OCI-LY7 (cell line): ENCODE measurements at regions of chr5 and their contacts with region 1.

Region 1: DNA sequence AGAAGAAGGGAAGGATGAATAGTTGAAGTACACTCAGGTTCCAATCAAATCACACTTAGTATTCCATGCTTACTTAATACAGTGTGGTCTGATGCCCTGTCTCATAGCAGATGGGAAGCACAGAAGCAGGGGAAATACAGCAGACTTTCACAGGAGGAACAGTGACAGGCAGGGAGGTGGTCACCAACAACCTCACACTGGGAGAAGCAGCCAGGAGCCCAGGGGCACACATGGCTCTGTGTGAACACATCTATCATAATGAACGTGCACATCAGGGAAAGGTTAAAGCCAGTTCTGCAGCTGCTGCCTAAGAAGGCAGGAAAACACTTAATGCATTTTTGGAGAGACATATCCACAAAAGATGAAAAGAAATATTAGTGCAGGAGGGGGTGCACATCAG is 312.3 kb downstream of the MED10 start:
- DNase-seq: no peak
- H3K4me3 ChIP-seq: no peak overlapping the region
- H3K27ac ChIP-seq: no peak overlapping the region
- H3K4me1 ChIP-seq: no peaks in the 10 kb centered on the region
- CTCF ChIP-seq: no peak

Region 2: GRCh38 chr5:6003040-6003825 is 62.8 kb before region 1 on chr5:
- CTCF ChIA-PET with region 1: no interaction called
- POLR2A ChIA-PET with region 1: no interaction called
- intact Hi-C with region 1: no loop called
- DNase-seq: no peak
- H3K4me3 ChIP-seq: no peak overlapping the region
- H3K27ac ChIP-seq: no peak overlapping the region
- H3K4me1 ChIP-seq: no peaks in the 10 kb centered on the region
- CTCF ChIP-seq: no peak

Region 3: GRCh38 chr5:6112125-6112524 is 46.1 kb after region 1 on chr5:
- CTCF ChIA-PET with region 1: no interaction called
- POLR2A ChIA-PET with region 1: no interaction called
- intact Hi-C with region 1: loop called (anchors 2 kb)
- DNase-seq: no peak
- H3K4me3 ChIP-seq: no peak overlapping the region
- H3K27ac ChIP-seq: no peak overlapping the region
- H3K4me1 ChIP-seq: no peaks in the 10 kb centered on the region
- CTCF ChIP-seq: no peak